T-cell (primary cell): ENCODE measurements at regions of chr12 and their contacts with region 1.

Region 1: DNA sequence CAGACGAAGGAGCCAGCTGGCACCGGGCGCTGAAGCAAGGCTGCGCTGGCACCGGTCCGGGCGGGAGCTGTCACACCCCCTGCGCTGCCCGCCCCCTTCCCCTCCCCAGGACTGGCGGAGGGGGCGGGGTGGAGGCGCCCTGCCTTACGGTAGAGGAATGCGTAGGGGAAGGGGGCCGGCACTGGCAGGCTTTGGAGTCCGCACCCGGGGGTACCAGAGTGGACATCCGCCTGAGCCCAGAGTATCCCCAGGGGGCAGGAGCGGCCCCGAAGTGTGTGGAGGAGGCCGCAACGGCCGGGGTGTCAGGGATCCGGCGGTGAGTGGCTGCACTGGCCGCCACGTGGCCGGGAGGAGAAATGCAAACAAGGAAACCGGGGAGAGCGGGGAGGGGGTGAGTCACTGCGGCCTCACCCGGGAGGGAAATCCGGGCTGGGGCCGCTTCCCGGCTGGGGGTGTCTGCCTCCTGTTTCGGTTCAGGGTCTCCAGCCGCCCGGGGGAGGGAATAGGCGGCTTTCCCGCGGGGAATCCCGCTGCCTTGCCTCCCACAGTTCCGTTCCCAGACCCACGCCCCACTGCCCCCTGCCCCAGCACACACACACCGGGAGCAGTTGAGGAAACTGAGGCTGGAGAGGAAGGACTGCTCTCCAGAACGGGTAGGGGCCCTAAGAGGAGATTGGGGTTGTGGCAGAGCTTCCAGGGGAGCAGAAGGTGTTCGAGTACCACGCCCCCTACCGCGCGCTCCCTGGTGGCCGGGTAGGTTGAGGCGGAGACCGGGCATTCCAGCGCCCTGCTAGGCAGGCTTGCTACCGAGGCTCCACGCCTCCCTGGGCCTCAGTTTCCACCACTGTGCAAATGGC is at the start of gene RAPGEF3:
- DNase-seq: peak in 34 of 35 experiments; percentile 20 to 75 (median 48)
- ATAC-seq: peak; percentile 86 to 91 (median 87)
- H3K4me3 ChIP-seq: peak within 1 kb of the TSS; percentile 58 to 68
- H3K4me3 Mint-ChIP-seq: peak within 1 kb of the TSS; percentile 71 to 77 (median 73)
- H3K27ac ChIP-seq: no peak within 1 kb of the TSS
- H3K27ac Mint-ChIP-seq: peak within 1 kb of the TSS in 1 of 2 donors; percentile 34
- H3K4me1 ChIP-seq: peaks cover 0 to 38% of the 10 kb centered on the region in 2 experiments
- H3K4me1 Mint-ChIP-seq: peaks cover 24 to 33% (median 24%) of the 10 kb centered on the region in 3 donors
- H3K27me3 ChIP-seq: peaks cover 0 to 16% of the 10 kb centered on the region in 2 experiments
- H3K27me3 Mint-ChIP-seq: no peaks in the 10 kb centered on the region
- total RNA-seq, gene RAPGEF3: 0.25 to 0.99 (median 0.82) TPM

Region 2: DNA sequence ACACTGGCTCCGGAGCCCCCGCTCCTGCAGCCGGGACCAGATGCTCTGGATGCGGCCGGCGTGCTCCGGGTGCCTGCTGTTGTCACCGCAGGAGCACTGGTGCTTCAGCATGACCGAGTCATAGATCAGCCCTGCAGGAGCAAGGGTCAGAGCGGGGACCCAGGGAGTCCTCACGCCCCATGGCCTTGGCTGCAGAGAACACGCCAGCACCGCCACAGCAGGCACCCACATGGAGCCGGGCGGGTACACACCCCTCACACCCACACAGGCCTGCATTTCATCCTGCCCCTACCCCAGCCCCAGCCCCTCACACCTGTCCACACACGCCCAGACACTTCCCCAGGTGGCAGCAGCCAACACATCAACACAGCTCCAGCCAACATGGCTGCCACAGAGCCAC is 32.8 kb after region 1 on chr12:
- CTCF ChIA-PET with region 1: no interaction called
- POLR2A ChIA-PET with region 1: no interaction called
- DNase-seq: no peak
- ATAC-seq: no peak
- H3K4me3 ChIP-seq: no peak overlapping the region
- H3K4me3 Mint-ChIP-seq: no peak overlapping the region
- H3K27ac ChIP-seq: no peak overlapping the region
- H3K27ac Mint-ChIP-seq: peak overlapping the region in 1 of 2 donors; percentile 22
- H3K4me1 ChIP-seq: no peaks in the 10 kb centered on the region
- H3K4me1 Mint-ChIP-seq: no peaks in the 10 kb centered on the region
- H3K27me3 ChIP-seq: no peaks in the 10 kb centered on the region
- H3K27me3 Mint-ChIP-seq: no peaks in the 10 kb centered on the region

Region 3: GRCh38 chr12:47819896-47820630 is 61.0 kb after region 1 on chr12 and contains the start of gene HDAC7:
- CTCF ChIA-PET with region 1: no interaction called
- POLR2A ChIA-PET with region 1: interaction called, 3 to 13 read pairs
- DNase-seq: peak; percentile 44 to 82 (median 57)
- ATAC-seq: peak; percentile 65 to 67 (median 67)
- H3K4me3 ChIP-seq: peak within 1 kb of the TSS; percentile 85 to 86
- H3K4me3 Mint-ChIP-seq: peak within 1 kb of the TSS; percentile 90 to 97 (median 95)
- H3K27ac ChIP-seq: peak within 1 kb of the TSS; percentile 95
- H3K27ac Mint-ChIP-seq: peak within 1 kb of the TSS; percentile 98
- H3K4me1 ChIP-seq: peaks cover 52 to 84% of the 10 kb centered on the region in 2 experiments
- H3K4me1 Mint-ChIP-seq: peaks cover 81 to 87% (median 86%) of the 10 kb centered on the region in 3 donors
- H3K27me3 ChIP-seq: no peaks in the 10 kb centered on the region
- H3K27me3 Mint-ChIP-seq: no peaks in the 10 kb centered on the region
- total RNA-seq, gene HDAC7: 142 to 192 (median 165) TPM

Region 4: DNA sequence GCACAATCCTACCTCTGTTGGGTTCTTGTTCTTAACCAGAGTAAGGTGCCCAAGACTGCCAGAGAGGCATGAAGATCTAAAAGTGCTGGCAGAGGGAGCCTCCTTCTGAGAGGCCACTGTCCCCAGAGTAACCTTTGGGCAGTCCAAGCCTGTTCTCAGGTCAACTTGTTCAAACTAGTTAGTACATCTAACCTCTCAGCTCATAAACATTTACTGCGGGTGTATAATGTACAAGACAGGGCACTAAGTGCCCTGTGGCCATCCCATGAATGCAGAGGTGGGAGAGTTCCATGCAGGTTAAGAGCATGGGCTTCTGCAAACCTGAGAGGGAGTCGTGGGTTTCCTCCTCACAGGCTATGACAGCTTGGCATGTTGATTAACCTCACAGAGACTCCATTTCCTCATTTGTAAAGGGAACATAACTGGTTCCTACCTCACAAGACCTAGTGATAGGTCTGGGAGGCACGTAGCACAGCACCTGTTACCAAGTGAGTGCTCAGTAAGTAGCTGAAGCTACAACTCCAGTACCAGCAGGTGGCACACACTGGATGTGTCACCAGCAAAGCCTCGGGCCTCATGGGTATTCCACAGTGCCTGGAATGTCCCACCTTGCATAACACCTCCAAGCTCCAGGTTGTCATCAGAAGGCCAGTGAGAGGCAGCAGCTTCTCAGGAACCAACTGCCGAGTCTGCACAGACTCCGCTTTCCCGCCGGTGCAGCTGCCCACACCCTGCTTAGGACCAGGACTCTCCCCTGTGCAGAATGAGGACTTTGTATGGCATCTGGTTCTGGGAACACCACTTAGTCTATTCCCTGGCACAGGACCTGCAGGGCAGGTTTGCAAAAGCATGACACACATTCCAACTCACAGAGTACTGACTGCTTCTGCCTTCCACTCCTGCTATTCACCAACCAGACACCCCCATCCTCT is 141.3 kb after region 1 on chr12:
- CTCF ChIA-PET with region 1: no interaction called
- POLR2A ChIA-PET with region 1: no interaction called
- DNase-seq: peak in 2 of 35 experiments; percentile 22 to 26
- ATAC-seq: no peak
- H3K4me3 ChIP-seq: no peak overlapping the region
- H3K4me3 Mint-ChIP-seq: peak overlapping the region in 1 of 3 donors; percentile 47
- H3K27ac ChIP-seq: no peak overlapping the region
- H3K27ac Mint-ChIP-seq: no peak overlapping the region
- H3K4me1 ChIP-seq: peaks cover 20 to 72% of the 10 kb centered on the region in 2 experiments
- H3K4me1 Mint-ChIP-seq: peaks cover 49 to 70% (median 70%) of the 10 kb centered on the region in 3 donors
- H3K27me3 ChIP-seq: peaks cover 0 to 36% of the 10 kb centered on the region in 2 experiments
- H3K27me3 Mint-ChIP-seq: peaks cover 0 to 4% of the 10 kb centered on the region in 2 donors